Cardiac septum (tissue), 1 donor: ENCODE measurements at regions of chr9 and their contacts with region 1.

Region 1: GRCh38 chr9:33225319-33226149 is 14.4 kb upstream of the SPINK4 start:
- DNase-seq: no peak

Region 2: GRCh38 chr9:33167046-33167808 is 58.3 kb before region 1 on chr9 and contains the start of gene B4GALT1:
- intact Hi-C with region 1: loop called (anchors 5 kb)
- DNase-seq: peak; percentile 99
- total RNA-seq, gene B4GALT1: 35.7 TPM